ENCODE measurements at regions of chr2 and their contacts with region 1.

Region 1: DNA sequence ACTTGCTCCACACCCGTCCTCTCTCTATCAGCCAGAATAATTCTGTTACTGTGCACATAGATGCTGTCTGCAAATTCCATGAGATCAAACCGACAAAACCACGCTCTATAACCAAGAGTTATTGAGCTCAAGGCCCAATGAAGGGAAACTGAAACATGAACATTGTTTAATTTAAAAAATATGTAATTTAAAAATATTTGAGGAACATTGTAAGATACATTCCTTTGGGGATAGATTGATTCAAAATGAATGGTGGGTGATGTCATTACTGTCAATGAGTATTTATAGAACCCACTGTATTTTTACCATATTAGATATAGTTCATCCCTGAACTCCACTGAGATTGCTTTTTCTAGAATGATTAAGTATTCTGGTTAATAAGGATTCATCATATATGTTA is 50.4 kb downstream of the NCKAP5 start:
- DNase-seq: no peak
- H3K4me3 ChIP-seq: no peak overlapping the region
- H3K27ac ChIP-seq: no peak overlapping the region
- H3K4me1 ChIP-seq: no peaks in the 10 kb centered on the region
- H3K27me3 ChIP-seq: peaks cover 0 to 1% of the 10 kb centered on the region in 2 experiments
- CTCF ChIP-seq: no peak
- POLR2A ChIP-seq: no peak

Region 2: DNA sequence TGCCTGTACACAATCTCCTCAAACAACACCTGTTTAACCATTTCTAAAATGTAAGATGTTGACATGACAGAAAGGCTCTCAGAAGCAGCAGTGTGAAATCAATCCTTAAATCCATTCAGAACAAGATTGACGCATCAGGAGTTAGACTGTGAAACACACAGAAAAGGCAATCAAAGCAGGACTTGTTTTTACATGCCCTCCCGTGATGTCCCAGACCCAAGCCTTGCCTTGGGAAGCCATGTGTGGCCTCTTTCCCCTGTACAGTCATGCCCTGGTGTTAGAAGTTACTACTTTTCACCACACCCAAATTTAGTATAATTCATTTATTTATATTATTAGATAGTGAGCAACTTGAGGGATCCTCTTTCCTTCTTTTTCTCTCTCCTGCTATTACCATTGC is 65.3 kb before region 1 on chr2:
- CTCF ChIA-PET with region 1: no interaction called
- POLR2A ChIA-PET with region 1: no interaction called
- dilution Hi-C with region 1: no loop called
- intact Hi-C with region 1: no loop called
- DNase-seq: no peak
- H3K4me3 ChIP-seq: no peak overlapping the region
- H3K27ac ChIP-seq: no peak overlapping the region
- H3K4me1 ChIP-seq: peaks cover 3% of the 10 kb centered on the region
- H3K27me3 ChIP-seq: no peaks in the 10 kb centered on the region
- CTCF ChIP-seq: no peak
- POLR2A ChIP-seq: no peak

Region 3: DNA sequence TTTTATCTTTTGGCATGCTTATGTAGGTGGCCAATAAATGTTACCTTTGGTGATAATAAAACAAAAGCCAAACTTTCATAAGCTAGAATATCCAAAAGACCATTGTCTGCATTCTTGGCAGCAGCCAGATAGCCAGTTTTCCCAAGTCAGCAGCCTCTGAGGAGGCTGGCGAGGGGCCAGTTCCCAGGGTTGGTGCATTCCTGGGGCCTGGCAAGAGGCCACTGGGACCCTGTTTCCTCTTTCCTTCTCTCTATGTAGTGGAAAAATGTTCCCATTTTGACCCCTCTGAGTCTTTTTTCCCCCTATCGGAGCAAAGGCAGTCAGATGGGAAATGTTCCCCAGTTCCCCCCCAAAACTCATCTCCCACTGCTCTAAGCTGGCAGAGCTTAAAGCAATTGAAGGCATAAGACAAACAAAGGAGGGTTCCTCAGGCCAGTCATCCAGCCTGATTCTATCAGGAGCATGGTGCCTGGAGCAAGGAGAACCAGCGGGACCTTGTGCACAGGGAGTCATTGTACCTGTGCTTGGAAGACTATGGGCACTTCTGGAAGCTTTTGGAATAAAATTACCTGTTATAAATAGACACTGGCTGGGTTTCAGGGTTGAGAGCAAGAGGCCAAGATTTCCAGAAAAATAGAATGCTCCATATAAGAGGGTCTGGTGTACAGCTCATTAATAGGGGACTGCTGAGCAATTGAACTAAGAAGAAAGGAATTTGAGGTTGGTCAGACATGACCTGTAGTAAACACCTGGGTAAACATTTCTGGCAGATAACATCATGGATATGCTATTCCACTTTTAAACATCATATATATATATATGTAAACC is 13.1 kb before region 1 on chr2:
- CTCF ChIA-PET with region 1: interaction called, 13 read pairs
- POLR2A ChIA-PET with region 1: no interaction called
- dilution Hi-C with region 1: no loop called
- intact Hi-C with region 1: no loop called
- DNase-seq: peak; percentile 88
- H3K4me3 ChIP-seq: no peak overlapping the region
- H3K27ac ChIP-seq: no peak overlapping the region
- H3K4me1 ChIP-seq: peaks cover 4% of the 10 kb centered on the region
- H3K27me3 ChIP-seq: peaks cover 0 to 2% of the 10 kb centered on the region in 2 experiments
- CTCF ChIP-seq: no peak
- POLR2A ChIP-seq: no peak

Region 4: DNA sequence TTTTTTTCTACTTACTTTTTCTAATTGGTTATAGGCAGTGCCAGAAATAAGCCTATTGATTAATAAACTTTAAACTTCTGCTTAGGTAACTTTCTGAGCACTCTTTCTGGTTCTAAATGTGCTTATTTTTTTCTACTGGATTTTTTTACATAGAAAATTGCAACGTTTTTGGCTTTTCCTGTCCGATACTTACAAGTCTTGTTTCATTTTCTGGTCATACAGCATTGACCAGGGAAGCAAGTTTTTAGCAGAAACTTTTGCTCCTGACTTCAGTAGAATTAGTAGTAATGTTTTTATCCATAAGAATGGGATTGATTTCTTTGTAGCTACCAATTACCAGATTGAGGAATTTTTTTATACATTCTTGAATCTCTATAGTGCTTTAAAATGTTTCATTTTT is 13.5 kb after region 1 on chr2:
- CTCF ChIA-PET with region 1: interaction called, 12 read pairs
- POLR2A ChIA-PET with region 1: no interaction called
- dilution Hi-C with region 1: no loop called
- intact Hi-C with region 1: no loop called
- DNase-seq: no peak
- H3K4me3 ChIP-seq: no peak overlapping the region
- H3K27ac ChIP-seq: no peak overlapping the region
- H3K4me1 ChIP-seq: no peaks in the 10 kb centered on the region
- H3K27me3 ChIP-seq: no peaks in the 10 kb centered on the region
- CTCF ChIP-seq: no peak
- POLR2A ChIP-seq: no peak